ENCODE measurements at regions of chr1 and their contacts with region 1.

Region 1: GRCh38 chr1:44730741-44731512 is at the start of gene RNU5D-1:
- DNase-seq: peak; percentile 99
- ATAC-seq: peak; percentile 84
- H3K4me3 Mint-ChIP-seq: peak within 1 kb of the TSS; percentile 61
- H3K27ac Mint-ChIP-seq: peak within 1 kb of the TSS; percentile 100
- H3K4me1 Mint-ChIP-seq: peaks cover 38% of the 10 kb centered on the region
- H3K27me3 Mint-ChIP-seq: peaks cover 2% of the 10 kb centered on the region
- CTCF ChIP-seq: peak; percentile 93
- total RNA-seq, gene RNU5D-1: not detected

Region 2: DNA sequence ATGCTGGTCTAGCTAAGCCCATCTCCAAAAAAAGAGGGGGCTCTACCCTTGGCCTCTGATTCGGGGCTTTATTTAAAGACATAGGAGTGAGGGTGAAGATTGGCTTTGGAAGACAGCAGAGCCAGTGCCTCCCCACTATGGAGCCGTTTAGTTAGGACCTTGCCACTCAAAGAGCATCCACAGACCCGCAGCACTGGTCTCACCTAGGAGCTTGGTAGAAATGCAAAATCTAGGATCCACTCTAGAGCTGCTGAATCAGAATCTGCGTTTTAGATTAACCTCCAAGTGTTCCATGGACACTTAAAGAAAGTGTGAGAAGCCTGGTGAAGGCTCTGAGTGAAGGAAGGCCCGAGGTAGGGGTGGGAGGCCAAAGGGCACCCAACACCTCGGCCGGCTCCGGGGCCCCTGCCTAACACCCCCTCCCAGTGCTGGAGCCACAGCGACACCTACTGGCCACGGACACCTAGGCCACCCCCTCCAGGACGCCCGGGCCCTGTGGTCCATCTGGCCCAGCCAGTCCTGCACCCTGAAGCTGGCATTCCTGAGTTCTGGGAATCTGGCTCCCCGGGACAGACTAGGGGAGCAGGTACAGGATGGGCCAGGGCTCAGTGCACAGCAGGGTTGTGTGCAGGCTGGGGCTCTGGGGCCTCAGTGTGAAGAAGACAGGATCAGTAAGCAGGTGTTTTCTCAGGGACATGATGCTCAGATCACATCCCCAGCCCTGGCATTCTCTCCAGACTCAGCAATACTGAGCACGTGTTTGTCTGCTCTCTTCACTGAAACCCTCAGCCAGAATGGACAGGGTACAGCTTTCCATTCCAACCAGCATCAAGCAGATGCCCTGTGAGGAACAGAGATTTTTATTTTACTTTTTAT is 135.8 kb before region 1 on chr1:
- CTCF ChIA-PET with region 1: no interaction called
- POLR2A ChIA-PET with region 1: no interaction called
- intact Hi-C with region 1: no loop called
- DNase-seq: peak; percentile 85
- ATAC-seq: peak; percentile 97
- H3K4me3 Mint-ChIP-seq: no peak overlapping the region
- H3K27ac Mint-ChIP-seq: no peak overlapping the region
- H3K4me1 Mint-ChIP-seq: no peaks in the 10 kb centered on the region
- H3K27me3 Mint-ChIP-seq: no peaks in the 10 kb centered on the region
- CTCF ChIP-seq: peak; percentile 98

Region 3: GRCh38 chr1:44631647-44632539 is 99.0 kb before region 1 on chr1:
- CTCF ChIA-PET with region 1: no interaction called
- POLR2A ChIA-PET with region 1: interaction called, 10 read pairs
- intact Hi-C with region 1: no loop called
- DNase-seq: peak; percentile 96
- ATAC-seq: peak; percentile 84
- H3K4me3 Mint-ChIP-seq: peak overlapping the region; percentile 88
- H3K27ac Mint-ChIP-seq: peak overlapping the region; percentile 97
- H3K4me1 Mint-ChIP-seq: peaks cover 38% of the 10 kb centered on the region
- H3K27me3 Mint-ChIP-seq: no peaks in the 10 kb centered on the region
- CTCF ChIP-seq: no peak

Region 4: GRCh38 chr1:44714944-44715571 is 15.9 kb before region 1 on chr1:
- CTCF ChIA-PET with region 1: interaction called, 38 read pairs
- POLR2A ChIA-PET with region 1: interaction called, 553 read pairs
- intact Hi-C with region 1: no loop called
- DNase-seq: peak; percentile 79
- ATAC-seq: peak; percentile 90
- H3K4me3 Mint-ChIP-seq: peak overlapping the region; percentile 48
- H3K27ac Mint-ChIP-seq: peak overlapping the region; percentile 61
- H3K4me1 Mint-ChIP-seq: peaks cover 44% of the 10 kb centered on the region
- H3K27me3 Mint-ChIP-seq: no peaks in the 10 kb centered on the region
- CTCF ChIP-seq: peak; percentile 99

Region 5: GRCh38 chr1:44775078-44775929 is 44.4 kb after region 1 on chr1 and contains the start of gene RPS8:
- CTCF ChIA-PET with region 1: interaction called, 11 read pairs
- POLR2A ChIA-PET with region 1: interaction called, 152 read pairs
- intact Hi-C with region 1: loop called (anchors 5 kb)
- DNase-seq: peak; percentile 95
- ATAC-seq: peak; percentile 79
- H3K4me3 Mint-ChIP-seq: peak within 1 kb of the TSS; percentile 91
- H3K27ac Mint-ChIP-seq: peak within 1 kb of the TSS; percentile 96
- H3K4me1 Mint-ChIP-seq: peaks cover 35% of the 10 kb centered on the region
- H3K27me3 Mint-ChIP-seq: no peaks in the 10 kb centered on the region
- CTCF ChIP-seq: no peak
- total RNA-seq, gene RPS8: 3,218 to 3,314 TPM

Region 6: DNA sequence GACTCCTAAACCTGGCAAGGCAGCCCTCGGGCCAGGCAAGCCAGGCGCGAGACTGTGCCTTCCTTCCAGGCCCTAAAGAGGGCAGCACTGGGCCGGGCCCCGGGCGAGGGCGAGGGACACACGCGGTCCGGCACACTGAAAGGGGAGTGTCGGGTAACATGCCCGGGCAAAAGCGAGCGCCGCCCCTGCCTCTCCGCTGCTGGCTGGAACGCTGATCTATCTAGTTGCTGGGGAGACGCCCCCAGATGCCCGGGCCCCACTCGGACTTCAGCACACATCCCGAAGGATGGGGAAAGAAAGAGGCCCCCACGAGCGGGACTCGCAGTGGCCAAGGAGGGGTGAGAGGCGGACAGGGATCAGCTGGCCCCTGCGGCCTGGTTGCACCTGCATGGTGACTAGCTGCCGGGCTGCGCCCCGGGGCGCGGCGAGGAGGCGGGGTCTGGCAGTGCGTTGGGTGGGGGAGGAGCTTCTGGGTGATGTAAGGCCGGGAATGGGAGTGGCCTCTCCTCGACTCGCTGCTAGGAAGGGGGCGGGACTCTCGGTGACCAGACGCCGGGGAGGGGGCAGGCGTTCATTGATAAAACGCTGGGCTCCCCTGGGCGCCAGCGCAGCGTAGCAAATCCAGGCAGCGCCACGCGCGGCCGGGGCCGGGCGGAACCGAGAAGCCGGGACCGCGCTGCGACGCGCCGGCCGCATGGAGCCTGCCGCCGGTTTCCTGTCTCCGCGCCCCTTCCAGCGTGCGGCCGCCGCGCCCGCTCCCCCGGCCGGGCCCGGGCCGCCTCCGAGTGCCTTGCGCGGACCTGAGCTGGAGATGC is 69.0 kb after region 1 on chr1 and contains the start of gene PLK3:
- CTCF ChIA-PET with region 1: interaction called, 4 read pairs
- POLR2A ChIA-PET with region 1: interaction called, 213 read pairs
- intact Hi-C with region 1: no loop called
- DNase-seq: peak; percentile 99
- ATAC-seq: peak; percentile 90
- H3K4me3 Mint-ChIP-seq: peak within 1 kb of the TSS; percentile 84
- H3K27ac Mint-ChIP-seq: peak within 1 kb of the TSS; percentile 100
- H3K4me1 Mint-ChIP-seq: peaks cover 35% of the 10 kb centered on the region
- H3K27me3 Mint-ChIP-seq: no peaks in the 10 kb centered on the region
- CTCF ChIP-seq: peak; percentile 76
- total RNA-seq, gene PLK3: 36.4 to 36.6 TPM

Region 7: DNA sequence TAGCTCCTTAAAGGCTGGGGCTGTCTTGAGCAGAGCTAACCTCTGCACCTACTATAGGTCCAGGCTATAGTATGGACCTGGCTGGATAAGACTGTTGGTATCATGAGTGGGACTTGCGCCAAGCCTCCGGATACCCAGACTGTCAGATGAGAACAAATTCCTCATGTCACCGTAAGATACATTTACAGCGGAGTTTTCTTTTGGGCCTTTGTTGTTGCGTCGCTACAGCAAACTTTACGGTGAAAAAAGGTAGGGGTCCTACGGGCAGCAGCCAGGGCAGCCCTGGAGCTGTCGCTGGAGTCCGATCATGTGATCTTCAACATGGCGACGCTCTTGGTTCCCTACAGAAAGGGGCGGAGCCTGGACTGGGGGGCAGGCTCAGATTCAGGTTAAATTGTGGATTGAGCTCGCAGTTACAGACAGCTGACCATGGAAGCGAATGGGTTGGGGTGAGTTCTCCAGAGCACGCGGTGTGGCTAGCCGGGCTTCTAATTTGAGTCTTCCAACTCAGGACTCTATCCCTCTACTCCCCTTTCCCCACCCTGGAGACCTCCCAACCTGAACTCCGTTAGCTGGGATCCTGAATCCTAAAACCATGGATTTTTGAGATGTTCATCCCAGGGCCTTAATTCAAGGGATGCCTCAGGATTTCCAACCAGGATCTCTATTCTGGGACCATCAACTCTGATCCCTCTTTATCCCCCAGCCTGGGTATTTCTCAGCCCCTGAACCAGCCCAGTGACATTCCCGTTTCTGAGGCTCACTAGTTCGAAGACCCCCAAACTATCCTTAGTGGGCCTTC is 281.1 kb after region 1 on chr1 and contains the start of gene UROD:
- CTCF ChIA-PET with region 1: interaction called, 5 read pairs
- POLR2A ChIA-PET with region 1: interaction called, 35 read pairs
- intact Hi-C with region 1: no loop called
- DNase-seq: peak; percentile 98
- ATAC-seq: peak; percentile 85
- H3K4me3 Mint-ChIP-seq: peak within 1 kb of the TSS; percentile 77
- H3K27ac Mint-ChIP-seq: peak within 1 kb of the TSS; percentile 92
- H3K4me1 Mint-ChIP-seq: peaks cover 31% of the 10 kb centered on the region
- H3K27me3 Mint-ChIP-seq: no peaks in the 10 kb centered on the region
- CTCF ChIP-seq: no peak
- total RNA-seq, gene UROD: 109 to 113 TPM